Dendritic cell treated with granulocyte-macrophage colony-stimulating factor and Interleukin-4, amounts not matched to agents 40 ng/mL and 50 ng/mL, for 4 days (primary cell): ENCODE measurements at regions of chr14 and their contacts with region 1.

Region 1: DNA sequence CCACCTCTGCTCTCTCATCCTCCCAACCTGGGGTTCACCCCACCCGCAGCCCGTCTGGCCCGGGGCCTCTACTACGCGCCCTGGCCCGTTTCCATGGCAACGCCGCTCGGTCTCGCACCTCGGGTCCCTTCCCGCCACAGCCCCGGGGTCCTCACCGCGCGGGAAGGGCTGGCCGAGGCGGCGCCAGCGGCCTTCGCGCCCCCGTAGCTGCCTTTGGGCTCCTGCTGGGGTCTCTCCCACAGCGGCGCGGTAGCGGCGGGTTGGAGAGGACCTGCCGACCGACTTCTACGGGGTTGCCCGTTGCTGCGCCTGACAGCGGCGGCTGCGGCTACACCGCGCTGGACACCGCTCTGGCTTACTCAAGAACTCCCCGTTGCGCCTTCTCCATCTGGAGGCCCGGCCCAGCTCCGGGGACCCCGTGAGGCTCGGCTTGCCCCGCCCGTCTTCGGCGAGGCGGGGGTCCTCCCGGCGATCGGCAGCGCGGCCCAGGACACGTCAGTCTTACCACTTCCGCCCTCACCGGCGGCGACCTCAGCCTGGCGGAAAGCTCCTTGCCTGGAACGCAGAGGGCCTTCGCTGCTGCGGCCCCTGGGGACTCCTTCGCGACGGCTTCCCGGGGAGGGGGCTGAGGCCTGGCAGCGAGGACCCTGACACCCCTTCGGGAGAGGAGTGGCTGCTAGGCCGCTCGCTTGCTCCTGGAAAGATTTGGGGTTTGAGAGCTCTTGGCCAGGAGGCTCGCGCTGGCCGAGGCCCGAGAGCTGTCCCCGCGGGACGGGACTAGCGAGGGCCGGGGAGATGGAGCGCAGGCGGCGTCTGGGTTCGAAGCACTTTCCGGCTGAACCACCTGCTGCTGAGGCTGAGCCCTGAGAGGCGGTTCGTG is at the start of gene TM9SF1:
- H3K4me3 Mint-ChIP-seq: peak within 1 kb of the TSS; percentile 94
- H3K27ac Mint-ChIP-seq: peak within 1 kb of the TSS; percentile 94
- H3K4me1 Mint-ChIP-seq: peaks cover 64% of the 10 kb centered on the region
- H3K27me3 Mint-ChIP-seq: no peaks in the 10 kb centered on the region

Region 2: DNA sequence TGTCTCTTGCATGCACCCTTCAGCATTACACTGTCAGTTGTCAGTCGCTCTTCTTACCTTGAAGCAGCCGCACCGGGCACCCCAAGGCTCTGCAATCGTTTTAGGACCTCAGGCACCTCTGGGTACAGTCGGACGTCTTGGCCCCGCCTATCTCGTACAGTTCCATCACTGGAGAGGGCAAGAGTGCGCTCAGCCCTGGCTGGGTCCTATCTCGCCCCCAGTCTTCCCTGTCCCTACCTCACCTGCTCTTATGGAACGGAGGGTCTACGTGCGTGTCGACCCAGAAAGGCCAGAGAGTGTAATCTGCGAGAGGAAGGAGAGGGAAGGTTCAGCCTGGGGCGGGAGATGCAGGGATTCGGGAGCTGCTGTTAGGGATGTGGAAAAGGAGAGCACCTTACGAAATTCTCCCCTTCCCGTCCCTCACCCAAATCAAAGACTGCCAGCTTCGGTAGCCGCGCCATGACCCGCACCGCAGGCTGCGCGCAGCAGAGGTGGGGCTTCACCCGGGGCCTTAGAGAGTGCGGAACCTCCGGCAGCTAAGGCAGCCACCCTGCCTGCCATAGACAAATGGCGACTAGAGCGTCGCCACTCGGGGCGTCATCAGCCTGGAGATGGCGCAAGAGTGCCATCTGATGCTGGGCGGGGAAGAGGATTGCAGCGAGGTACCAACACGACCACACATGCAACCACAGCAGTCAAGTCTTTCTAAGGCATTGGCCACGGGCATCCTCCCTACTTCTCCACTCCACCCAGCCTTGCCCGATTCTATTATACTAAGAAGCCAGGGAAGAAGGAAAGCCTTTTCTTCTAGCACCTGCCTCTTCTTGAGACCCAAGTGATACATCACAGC is 20.3 kb after region 1 on chr14 and contains the start of gene MDP1:
- intact Hi-C with region 1: loop called (anchors 1 kb)
- H3K4me3 Mint-ChIP-seq: peak within 1 kb of the TSS; percentile 90
- H3K27ac Mint-ChIP-seq: peak within 1 kb of the TSS; percentile 99
- H3K4me1 Mint-ChIP-seq: peaks cover 41% of the 10 kb centered on the region
- H3K27me3 Mint-ChIP-seq: no peaks in the 10 kb centered on the region